ENCODE measurements at regions of chr2 and their contacts with region 1.

Region 1: DNA sequence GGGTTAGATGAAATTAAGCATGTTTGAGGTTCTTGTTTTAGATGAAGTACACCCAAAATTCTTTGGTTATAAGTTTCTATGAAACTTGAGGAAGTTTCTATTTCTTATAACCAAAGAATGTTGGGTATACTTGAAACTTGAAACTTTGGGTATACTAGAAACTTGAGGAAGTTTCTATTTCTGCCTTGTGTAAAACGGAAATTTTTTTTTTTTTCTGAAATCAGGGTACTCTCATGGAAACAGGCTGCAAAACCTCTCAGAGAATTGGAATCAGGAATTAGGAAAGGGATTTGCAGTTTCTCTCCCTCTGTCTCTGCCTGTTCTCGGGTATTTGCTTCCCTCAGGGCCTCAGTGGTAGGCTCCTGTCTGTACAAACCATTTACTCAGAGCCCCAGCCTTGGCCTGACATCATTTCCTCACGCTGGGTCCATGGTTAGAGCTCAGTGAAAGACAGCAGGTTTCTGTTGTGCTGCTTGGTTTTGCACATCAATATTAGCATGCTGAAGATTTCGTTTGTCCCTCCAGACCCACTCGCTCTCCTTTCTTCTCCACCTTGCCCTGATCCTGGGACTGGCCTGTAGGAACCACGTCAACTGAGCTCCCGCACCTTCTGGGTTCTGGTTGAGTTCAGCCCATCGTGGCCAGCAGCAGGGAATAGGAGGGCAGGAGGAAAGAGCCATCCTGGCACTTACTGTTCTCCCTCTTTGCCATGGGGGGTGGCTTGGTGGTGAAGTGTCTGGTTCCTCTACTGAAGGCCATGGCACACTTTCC is 106.4 kb downstream of the POLR1A start:
- DNase-seq: peak; percentile 65

Region 2: DNA sequence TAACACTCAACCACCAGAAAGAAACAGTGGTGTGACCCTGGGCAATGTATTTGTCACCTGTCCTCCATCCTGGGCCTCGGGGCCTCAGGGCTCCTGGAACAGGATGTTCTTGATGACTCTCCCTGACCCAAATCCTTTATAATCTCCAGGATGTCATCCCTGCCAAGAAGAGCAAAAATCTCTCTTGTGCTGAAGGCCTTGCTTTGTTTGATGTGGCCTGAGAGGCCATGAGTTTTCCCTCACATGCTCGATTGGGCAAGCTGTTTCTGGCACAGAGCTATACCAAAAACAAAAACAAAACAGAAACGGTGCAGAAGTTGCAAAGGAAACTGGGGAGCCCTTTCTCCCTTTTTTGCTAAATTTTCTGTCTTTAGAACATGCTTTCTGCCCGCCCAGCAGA is 74.7 kb before region 1 on chr2:
- intact Hi-C with region 1: loop called (anchors 5 kb)
- DNase-seq: no peak

Region 3: GRCh38 chr2:85959826-85960225 is 39.4 kb before region 1 on chr2:
- intact Hi-C with region 1: loop called (anchors 5 kb)
- DNase-seq: no peak